ENCODE measurements at regions of chr6 and their contacts with region 1.

Region 1: GRCh38 chr6:125759184-125759902 is 9.9 kb downstream of the HEY2 start:
- DNase-seq: peak; percentile 88
- ATAC-seq: peak; percentile 98
- H3K4me3 Mint-ChIP-seq: no peak overlapping the region
- H3K27ac Mint-ChIP-seq: no peak overlapping the region
- H3K4me1 Mint-ChIP-seq: peaks cover 36% of the 10 kb centered on the region
- H3K27me3 Mint-ChIP-seq: no peaks in the 10 kb centered on the region; the same call in none of the 2 replicates
- CTCF ChIP-seq: peak; percentile 83

Region 2: DNA sequence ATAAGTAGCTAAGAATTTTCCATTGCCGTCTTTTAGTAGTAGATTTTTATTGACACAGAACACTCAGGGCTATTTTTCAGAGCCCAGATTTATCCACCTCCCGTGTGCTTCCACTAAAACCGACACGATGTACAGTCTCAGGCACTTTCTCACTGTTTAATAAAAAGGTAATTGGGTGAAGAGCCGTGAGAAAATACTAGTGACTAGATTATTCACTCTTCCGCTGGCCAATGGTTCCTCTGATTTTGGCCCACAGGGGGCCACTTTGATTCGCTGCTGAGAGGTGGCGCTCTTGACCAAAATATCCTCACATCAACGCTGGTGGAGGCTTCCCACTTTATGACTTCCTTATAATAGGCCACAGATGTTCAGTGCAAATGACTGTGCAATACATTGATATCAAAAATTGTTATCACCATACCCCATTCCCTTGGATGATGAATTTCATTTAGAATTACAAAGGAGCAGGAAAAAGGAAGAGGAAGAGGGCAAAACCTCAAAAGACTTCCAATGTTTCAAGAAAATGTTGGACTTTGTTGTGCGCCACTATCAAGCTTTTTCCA is 445.2 kb before region 1 on chr6:
- CTCF ChIA-PET with region 1: interaction called, 21 read pairs
- POLR2A ChIA-PET with region 1: no interaction called
- DNase-seq: peak; percentile 64
- ATAC-seq: peak; percentile 77
- H3K4me3 Mint-ChIP-seq: no peak overlapping the region
- H3K27ac Mint-ChIP-seq: no peak overlapping the region
- H3K4me1 Mint-ChIP-seq: peaks cover 12% of the 10 kb centered on the region
- H3K27me3 Mint-ChIP-seq: no peaks in the 10 kb centered on the region
- CTCF ChIP-seq: no peak; the same call in 1 of the 2 replicates

Region 3: DNA sequence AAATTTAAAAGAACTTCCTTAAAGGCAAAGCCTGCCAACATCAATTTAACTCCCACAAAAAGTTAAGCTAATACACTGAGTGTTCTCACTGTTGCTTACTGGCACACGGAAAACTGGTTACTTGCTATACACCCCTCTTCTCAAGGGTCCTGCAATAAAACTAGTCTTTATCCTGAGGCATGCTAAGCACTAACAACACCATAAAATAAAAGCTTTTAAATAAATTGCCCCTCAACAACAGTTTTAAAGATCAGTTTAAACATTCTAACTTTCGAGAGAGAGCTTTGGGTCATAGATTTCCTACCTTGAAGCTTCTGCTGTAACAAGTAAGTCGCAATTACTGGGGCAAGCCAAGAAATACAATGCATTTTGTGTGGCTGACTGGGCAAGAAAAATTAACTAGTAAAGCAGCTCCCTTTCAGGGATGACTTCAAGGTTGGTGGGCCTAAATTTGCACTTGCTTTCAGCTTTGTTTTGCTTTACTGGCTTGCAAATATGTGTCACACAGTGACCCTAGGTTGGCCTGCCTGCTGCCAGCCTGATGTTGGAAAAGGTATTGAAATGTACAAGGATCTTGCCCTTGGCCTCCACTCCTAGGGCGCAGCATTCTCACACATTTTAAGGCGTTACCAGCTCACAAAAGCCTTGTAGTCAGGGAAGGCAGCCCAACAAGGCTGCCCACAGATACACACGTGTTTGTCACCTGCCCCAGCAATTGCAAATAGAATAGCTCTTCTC is 13.9 kb before region 1 on chr6:
- CTCF ChIA-PET with region 1: interaction called, 12 read pairs
- POLR2A ChIA-PET with region 1: interaction called, 4 read pairs
- DNase-seq: peak; percentile 52
- ATAC-seq: peak; percentile 49
- H3K4me3 Mint-ChIP-seq: peak overlapping the region; percentile 78
- H3K27ac Mint-ChIP-seq: peak overlapping the region; percentile 99
- H3K4me1 Mint-ChIP-seq: peaks cover 54% of the 10 kb centered on the region
- H3K27me3 Mint-ChIP-seq: peaks cover 25% of the 10 kb centered on the region
- CTCF ChIP-seq: no peak